CD8-positive, alpha-beta memory T cell (primary cell): ENCODE measurements at regions of chr14 and their contacts with region 1.

Region 1: GRCh38 chr14:49633640-49634546 is 1.2 kb downstream of the DNAAF2 start:
- DNase-seq: peak; percentile 90 to 96 (median 94)
- H3K4me3 ChIP-seq: peak overlapping the region; percentile 96
- H3K4me3 Mint-ChIP-seq: peak overlapping the region; percentile 92 to 100 (median 95)
- H3K27ac ChIP-seq: peak overlapping the region; percentile 99
- H3K27ac Mint-ChIP-seq: peak overlapping the region; percentile 91 to 100 (median 95)
- H3K4me1 ChIP-seq: peaks cover 32% of the 10 kb centered on the region
- H3K4me1 Mint-ChIP-seq: peaks cover 47 to 78% (median 60%) of the 10 kb centered on the region in 3 donors
- H3K27me3 ChIP-seq: no peaks in the 10 kb centered on the region
- H3K27me3 Mint-ChIP-seq: peaks cover 0 to 1% of the 10 kb centered on the region in 2 donors

Region 2: GRCh38 chr14:49598485-49599300 is 35.2 kb before region 1 on chr14 and contains the start of gene LRR1:
- CTCF ChIA-PET with region 1: interaction called, 21 read pairs
- POLR2A ChIA-PET with region 1: interaction called, 12 read pairs
- DNase-seq: peak; percentile 77 to 91 (median 88)
- H3K4me3 ChIP-seq: peak within 1 kb of the TSS; percentile 99
- H3K4me3 Mint-ChIP-seq: peak within 1 kb of the TSS; percentile 93 to 100 (median 97)
- H3K27ac ChIP-seq: peak within 1 kb of the TSS; percentile 94
- H3K27ac Mint-ChIP-seq: peak within 1 kb of the TSS; percentile 94 to 99 (median 97)
- H3K4me1 ChIP-seq: peaks cover 10% of the 10 kb centered on the region
- H3K4me1 Mint-ChIP-seq: peaks cover 23 to 50% (median 36%) of the 10 kb centered on the region in 3 donors
- H3K27me3 ChIP-seq: no peaks in the 10 kb centered on the region
- H3K27me3 Mint-ChIP-seq: no peaks in the 10 kb centered on the region
- total RNA-seq, gene LRR1: 51.1 to 52.2 TPM

Region 3: DNA sequence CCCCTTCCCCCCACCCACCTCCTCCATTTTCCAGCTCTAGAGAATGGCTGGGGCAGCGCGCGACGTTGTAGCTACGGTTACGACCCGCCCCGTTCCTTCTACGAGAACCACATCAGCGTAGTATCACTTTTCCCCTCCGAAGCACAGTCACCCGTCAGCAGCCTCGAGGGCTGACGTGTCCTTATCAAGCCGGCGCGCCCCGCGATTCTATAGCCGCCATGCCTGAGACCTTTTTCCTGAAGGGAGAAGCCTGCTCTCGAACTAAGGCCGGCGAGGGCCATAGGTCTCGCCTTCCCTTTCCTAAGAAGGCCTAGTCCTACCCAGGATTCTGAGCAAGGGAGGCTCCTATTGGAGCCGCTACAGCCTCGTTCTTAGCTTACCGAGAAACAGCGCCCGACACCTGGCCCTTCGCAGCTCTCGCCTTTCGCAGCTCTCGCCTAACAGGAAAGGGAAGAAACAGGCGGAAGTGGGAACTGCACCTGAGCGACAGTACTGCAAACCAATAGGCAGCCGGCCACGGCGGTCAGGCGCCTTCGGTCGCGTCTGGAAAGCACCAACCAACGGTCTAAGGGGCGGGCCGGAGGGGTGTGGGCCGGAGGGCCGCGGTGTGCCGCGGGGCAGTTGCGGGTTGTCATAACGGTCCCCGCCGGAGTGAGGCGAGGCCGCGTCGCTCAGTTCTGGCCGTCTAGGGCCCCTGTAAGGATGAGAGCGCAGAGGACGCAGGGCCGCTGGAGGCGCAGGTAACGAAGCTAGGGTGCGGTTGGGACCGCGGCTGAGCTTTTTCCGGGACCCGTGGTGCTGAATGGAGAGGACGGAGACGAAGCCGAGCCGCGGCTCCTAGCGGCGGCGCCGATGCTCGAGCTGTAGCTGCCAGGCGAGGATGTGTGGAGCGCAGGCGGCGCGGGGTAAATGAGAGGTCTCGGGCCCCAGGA is 13.4 kb before region 1 on chr14 and contains the starts of genes MGAT2 and RPL36AL:
- CTCF ChIA-PET with region 1: interaction called, 151 read pairs
- POLR2A ChIA-PET with region 1: interaction called, 105 read pairs
- DNase-seq: peak; percentile 91 to 96 (median 96)
- H3K4me3 ChIP-seq: peak within 1 kb of the TSS; percentile 80
- H3K4me3 Mint-ChIP-seq: peak within 1 kb of the TSS; percentile 94 to 99 (median 98)
- H3K27ac ChIP-seq: peak within 1 kb of the TSS; percentile 99
- H3K27ac Mint-ChIP-seq: peak within 1 kb of the TSS; percentile 98 to 100 (median 100)
- H3K4me1 ChIP-seq: peaks cover 50% of the 10 kb centered on the region
- H3K4me1 Mint-ChIP-seq: peaks cover 57 to 68% (median 65%) of the 10 kb centered on the region in 3 donors
- H3K27me3 ChIP-seq: no peaks in the 10 kb centered on the region
- H3K27me3 Mint-ChIP-seq: no peaks in the 10 kb centered on the region
- total RNA-seq, gene MGAT2: 57.7 to 60.2 TPM
- total RNA-seq, gene RPL36AL: 236 to 273 TPM

Region 4: GRCh38 chr14:49692811-49693734 is 59.2 kb after region 1 on chr14 and contains the start of gene KLHDC1:
- CTCF ChIA-PET with region 1: interaction called, 7 read pairs
- POLR2A ChIA-PET with region 1: interaction called, 11 read pairs
- DNase-seq: peak; percentile 71 to 85 (median 77)
- H3K4me3 ChIP-seq: peak within 1 kb of the TSS; percentile 76
- H3K4me3 Mint-ChIP-seq: peak within 1 kb of the TSS; percentile 78 to 94 (median 88)
- H3K27ac ChIP-seq: peak within 1 kb of the TSS; percentile 70
- H3K27ac Mint-ChIP-seq: peak within 1 kb of the TSS; percentile 78 to 97 (median 92)
- H3K4me1 ChIP-seq: peaks cover 26% of the 10 kb centered on the region
- H3K4me1 Mint-ChIP-seq: peaks cover 21 to 37% (median 34%) of the 10 kb centered on the region in 3 donors
- H3K27me3 ChIP-seq: no peaks in the 10 kb centered on the region
- H3K27me3 Mint-ChIP-seq: no peaks in the 10 kb centered on the region
- total RNA-seq, gene KLHDC1: 2.0 to 2.7 TPM

Region 5: DNA sequence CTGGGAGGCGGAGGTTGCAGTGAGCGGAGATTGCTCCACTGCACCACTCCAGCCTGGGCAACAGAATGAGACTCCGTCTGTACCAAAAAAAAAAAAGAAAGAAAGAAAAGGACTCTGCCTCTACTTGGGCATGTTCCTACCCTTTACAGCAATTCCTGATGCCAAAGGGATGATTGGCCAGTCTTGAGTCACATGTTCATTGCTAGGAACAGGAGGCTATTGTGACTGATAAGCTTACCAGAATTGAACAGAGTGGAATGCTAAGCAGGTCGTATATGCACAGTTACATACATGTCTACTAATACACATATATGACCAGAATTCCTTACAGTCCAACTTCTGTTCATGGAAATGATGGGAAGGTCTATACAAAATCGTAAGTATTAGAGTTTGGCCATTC is 93.3 kb after region 1 on chr14:
- CTCF ChIA-PET with region 1: no interaction called
- POLR2A ChIA-PET with region 1: no interaction called
- DNase-seq: no peak
- H3K4me3 ChIP-seq: no peak overlapping the region
- H3K4me3 Mint-ChIP-seq: no peak overlapping the region
- H3K27ac ChIP-seq: no peak overlapping the region
- H3K27ac Mint-ChIP-seq: no peak overlapping the region
- H3K4me1 ChIP-seq: no peaks in the 10 kb centered on the region
- H3K4me1 Mint-ChIP-seq: no peaks in the 10 kb centered on the region
- H3K27me3 ChIP-seq: no peaks in the 10 kb centered on the region
- H3K27me3 Mint-ChIP-seq: no peaks in the 10 kb centered on the region

Region 6: GRCh38 chr14:49767562-49768300 is 133.8 kb after region 1 on chr14 and contains the start of gene KLHDC2:
- CTCF ChIA-PET with region 1: interaction called, 59 read pairs
- POLR2A ChIA-PET with region 1: interaction called, 52 read pairs
- DNase-seq: peak; percentile 83 to 91 (median 89)
- H3K4me3 ChIP-seq: peak within 1 kb of the TSS; percentile 99
- H3K4me3 Mint-ChIP-seq: peak within 1 kb of the TSS; percentile 96 to 99 (median 98)
- H3K27ac ChIP-seq: peak within 1 kb of the TSS; percentile 98
- H3K27ac Mint-ChIP-seq: peak within 1 kb of the TSS; percentile 98 to 100 (median 99)
- H3K4me1 ChIP-seq: peaks cover 28% of the 10 kb centered on the region
- H3K4me1 Mint-ChIP-seq: peaks cover 30 to 43% (median 42%) of the 10 kb centered on the region in 3 donors
- H3K27me3 ChIP-seq: no peaks in the 10 kb centered on the region
- H3K27me3 Mint-ChIP-seq: peaks cover 0 to 3% of the 10 kb centered on the region in 2 donors
- total RNA-seq, gene KLHDC2: 28.9 to 29.0 TPM